Pancreas (tissue), 10 donors: ENCODE measurements at regions of chr19 and their contacts with region 1.

Region 1: DNA sequence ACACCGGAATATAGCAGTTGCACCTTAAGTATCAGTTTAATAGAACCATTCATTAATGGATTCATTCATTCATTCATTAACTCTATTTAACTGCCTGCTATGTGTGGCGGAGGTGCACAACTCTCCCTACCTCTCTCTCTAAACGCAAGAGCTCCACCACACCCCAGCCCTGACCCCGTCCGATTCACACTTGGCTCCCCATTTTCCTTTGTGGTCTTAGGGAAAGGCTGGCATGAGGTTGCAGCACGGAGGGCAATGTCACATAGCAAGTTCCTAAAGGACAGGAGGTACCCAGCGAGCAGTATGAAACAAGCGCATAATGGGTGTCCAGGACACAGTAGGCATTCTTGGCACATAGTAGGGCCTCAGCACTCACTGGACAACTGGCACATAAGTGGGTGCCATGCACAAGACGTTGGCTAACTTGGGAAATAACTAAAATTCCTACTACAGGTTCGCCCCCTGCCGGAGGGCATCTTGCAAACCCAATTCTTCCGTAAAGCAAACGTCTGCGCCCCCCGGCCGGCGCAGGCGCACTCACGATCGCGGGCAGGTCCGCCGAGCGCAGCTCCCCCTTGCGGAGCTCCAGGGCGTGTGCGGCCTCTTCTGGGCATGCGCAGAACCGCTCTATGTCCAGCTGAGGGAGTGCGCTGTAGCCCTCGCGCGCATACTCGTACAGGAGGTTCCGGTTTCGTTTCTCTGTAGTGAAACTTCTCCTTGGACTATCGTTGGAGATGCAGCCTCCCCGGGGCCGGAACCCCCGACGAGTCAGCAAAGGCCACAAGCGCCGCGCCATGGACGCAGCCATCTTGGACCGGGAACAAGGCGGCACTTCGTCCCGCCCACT is at the start of gene SARS2:
- DNase-seq: peak; percentile 86 to 98 (median 94)
- ATAC-seq: peak; percentile 85 to 96 (median 86)
- H3K4me3 ChIP-seq: peak within 1 kb of the TSS; percentile 46 to 66 (median 55)
- H3K27ac ChIP-seq: peak within 1 kb of the TSS; percentile 49 to 93 (median 87)
- H3K4me1 ChIP-seq: peaks cover 4 to 13% (median 7%) of the 10 kb centered on the region in 3 donors
- H3K27me3 ChIP-seq: no peaks in the 10 kb centered on the region
- CTCF ChIP-seq: peak; percentile 98 to 100 (median 98)
- total RNA-seq, gene SARS2: 8.8 to 21.8 (median 14.0) TPM

Region 2: GRCh38 chr19:38514812-38515633 is 415.1 kb before region 1 on chr19:
- intact Hi-C with region 1: loop called in 1 of 3 experiments (anchors 10 kb)
- DNase-seq: peak; percentile 52 to 90 (median 76)
- ATAC-seq: peak; percentile 88 to 99 (median 95)
- H3K4me3 ChIP-seq: no peak overlapping the region
- H3K27ac ChIP-seq: no peak overlapping the region
- H3K4me1 ChIP-seq: no peaks in the 10 kb centered on the region
- H3K27me3 ChIP-seq: no peaks in the 10 kb centered on the region
- CTCF ChIP-seq: peak; percentile 77 to 85 (median 82)

Region 3: GRCh38 chr19:38891771-38892170 is 38.4 kb before region 1 on chr19:
- intact Hi-C with region 1: no loop called
- DNase-seq: no peak
- ATAC-seq: no peak
- H3K4me3 ChIP-seq: no peak overlapping the region
- H3K27ac ChIP-seq: no peak overlapping the region
- H3K4me1 ChIP-seq: no peaks in the 10 kb centered on the region
- H3K27me3 ChIP-seq: no peaks in the 10 kb centered on the region
- CTCF ChIP-seq: no peak

Region 4: GRCh38 chr19:39007091-39007490 is 76.9 kb after region 1 on chr19:
- intact Hi-C with region 1: no loop called
- DNase-seq: no peak
- ATAC-seq: no peak
- H3K4me3 ChIP-seq: no peak overlapping the region
- H3K27ac ChIP-seq: no peak overlapping the region
- H3K4me1 ChIP-seq: no peaks in the 10 kb centered on the region
- H3K27me3 ChIP-seq: no peaks in the 10 kb centered on the region
- CTCF ChIP-seq: no peak